Caco-2 (cell line): ENCODE measurements at regions of chrX and their contacts with region 1.

Region 1: GRCh38 chrX:112043997-112044396 is 38.6 kb downstream of the TRPC5 start:
- DNase-seq: peak in 1 of 2 experiments; percentile 0
- H3K4me3 ChIP-seq: no peak overlapping the region
- H3K4me3 Mint-ChIP-seq: no peak overlapping the region
- H3K27ac Mint-ChIP-seq: no peak overlapping the region
- H3K4me1 ChIP-seq: no peaks in the 10 kb centered on the region
- H3K4me1 Mint-ChIP-seq: no peaks in the 10 kb centered on the region
- H3K27me3 ChIP-seq: no peaks in the 10 kb centered on the region
- H3K27me3 Mint-ChIP-seq: peaks cover 9% of the 10 kb centered on the region
- CTCF ChIP-seq: peak; percentile 12 to 15

Region 2: DNA sequence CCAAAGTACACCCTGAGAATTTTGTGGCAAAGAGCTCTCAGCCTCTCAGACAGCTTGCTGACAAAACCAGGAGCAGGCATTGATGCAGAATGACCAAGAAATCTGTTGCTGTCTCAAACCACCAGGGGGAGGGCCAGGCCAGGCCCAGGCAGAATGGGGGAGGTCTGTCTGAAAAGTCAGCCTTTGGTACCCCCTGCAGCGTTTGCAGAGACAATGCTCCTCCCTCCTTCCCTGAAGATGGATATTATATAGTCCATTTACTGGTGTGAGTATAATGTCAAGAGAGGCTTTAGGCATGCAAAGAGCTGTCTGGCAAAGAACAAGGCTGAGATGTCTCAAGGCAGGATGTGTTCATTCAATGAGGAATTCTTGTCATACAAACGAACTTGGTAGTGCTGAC is 220.9 kb before region 1 on chrX:
- CTCF ChIA-PET with region 1: no interaction called
- POLR2A ChIA-PET with region 1: no interaction called
- intact Hi-C with region 1: loop called (anchors 1 kb)
- DNase-seq: peak in 1 of 2 experiments; percentile 26
- H3K4me3 ChIP-seq: no peak overlapping the region
- H3K4me3 Mint-ChIP-seq: no peak overlapping the region
- H3K27ac Mint-ChIP-seq: no peak overlapping the region
- H3K4me1 ChIP-seq: no peaks in the 10 kb centered on the region
- H3K4me1 Mint-ChIP-seq: no peaks in the 10 kb centered on the region
- H3K27me3 ChIP-seq: no peaks in the 10 kb centered on the region
- H3K27me3 Mint-ChIP-seq: peaks cover 4% of the 10 kb centered on the region
- CTCF ChIP-seq: peak; percentile 34 to 53